Activated B cell treated with CpG ODN at 0.5 μM for 24 hours (primary cell): ENCODE measurements at regions of chr1 and their contacts with region 1.

Region 1: DNA sequence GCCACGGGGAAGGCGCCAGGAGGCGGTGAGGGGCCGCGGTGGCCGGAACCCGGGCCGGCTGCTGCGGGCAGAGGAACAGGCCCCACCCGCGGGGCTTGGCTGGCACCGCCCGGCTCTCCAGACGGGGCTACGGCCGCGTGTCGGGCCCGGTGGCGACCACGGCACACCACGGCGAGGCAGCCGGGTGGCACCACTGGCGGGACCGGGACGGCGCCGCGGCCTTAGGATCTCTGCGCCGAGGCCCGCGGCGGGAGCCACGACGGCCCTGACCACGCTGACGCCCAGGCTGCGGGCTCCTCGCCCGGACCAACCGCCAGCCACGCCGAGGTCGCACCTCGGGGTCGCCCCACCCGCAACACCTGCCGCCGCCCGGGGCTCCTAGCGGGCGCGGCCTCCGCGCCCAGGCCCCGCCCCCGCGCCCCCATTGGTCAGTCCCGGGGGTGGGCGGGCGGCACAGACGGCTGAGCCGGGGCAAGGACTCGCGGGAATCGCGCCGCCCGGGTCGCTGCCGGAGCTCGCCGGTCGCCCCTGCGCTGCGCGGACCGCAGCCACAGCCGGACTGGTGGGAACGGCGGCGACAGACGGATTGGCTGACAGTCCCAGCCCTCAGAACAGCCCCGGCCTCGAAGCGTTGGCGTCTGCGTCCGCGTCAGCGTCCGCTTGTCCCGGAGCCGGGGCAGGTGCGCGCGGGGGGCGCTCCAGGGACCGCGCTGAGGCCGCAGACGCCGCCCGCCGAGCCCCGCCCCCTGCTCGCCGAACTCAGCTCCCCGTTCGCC is at the start of gene BMP8A:
- DNase-seq: peak; percentile 80
- ATAC-seq: peak; percentile 94
- H3K4me3 Mint-ChIP-seq: peak within 1 kb of the TSS; percentile 69
- H3K27ac Mint-ChIP-seq: no peak within 1 kb of the TSS
- H3K4me1 Mint-ChIP-seq: peaks cover 6% of the 10 kb centered on the region
- H3K27me3 Mint-ChIP-seq: peaks cover 20% of the 10 kb centered on the region
- CTCF ChIP-seq: no peak
- total RNA-seq, gene BMP8A: 0.20 TPM in 1 of 2 replicates, not detected in the other

Region 2: GRCh38 chr1:39378377-39378776 is 113.0 kb before region 1 on chr1:
- CTCF ChIA-PET with region 1: no interaction called
- POLR2A ChIA-PET with region 1: no interaction called
- intact Hi-C with region 1: no loop called
- DNase-seq: no peak
- ATAC-seq: no peak
- H3K4me3 Mint-ChIP-seq: no peak overlapping the region
- H3K27ac Mint-ChIP-seq: no peak overlapping the region
- H3K4me1 Mint-ChIP-seq: no peaks in the 10 kb centered on the region
- H3K27me3 Mint-ChIP-seq: no peaks in the 10 kb centered on the region
- CTCF ChIP-seq: no peak

Region 3: DNA sequence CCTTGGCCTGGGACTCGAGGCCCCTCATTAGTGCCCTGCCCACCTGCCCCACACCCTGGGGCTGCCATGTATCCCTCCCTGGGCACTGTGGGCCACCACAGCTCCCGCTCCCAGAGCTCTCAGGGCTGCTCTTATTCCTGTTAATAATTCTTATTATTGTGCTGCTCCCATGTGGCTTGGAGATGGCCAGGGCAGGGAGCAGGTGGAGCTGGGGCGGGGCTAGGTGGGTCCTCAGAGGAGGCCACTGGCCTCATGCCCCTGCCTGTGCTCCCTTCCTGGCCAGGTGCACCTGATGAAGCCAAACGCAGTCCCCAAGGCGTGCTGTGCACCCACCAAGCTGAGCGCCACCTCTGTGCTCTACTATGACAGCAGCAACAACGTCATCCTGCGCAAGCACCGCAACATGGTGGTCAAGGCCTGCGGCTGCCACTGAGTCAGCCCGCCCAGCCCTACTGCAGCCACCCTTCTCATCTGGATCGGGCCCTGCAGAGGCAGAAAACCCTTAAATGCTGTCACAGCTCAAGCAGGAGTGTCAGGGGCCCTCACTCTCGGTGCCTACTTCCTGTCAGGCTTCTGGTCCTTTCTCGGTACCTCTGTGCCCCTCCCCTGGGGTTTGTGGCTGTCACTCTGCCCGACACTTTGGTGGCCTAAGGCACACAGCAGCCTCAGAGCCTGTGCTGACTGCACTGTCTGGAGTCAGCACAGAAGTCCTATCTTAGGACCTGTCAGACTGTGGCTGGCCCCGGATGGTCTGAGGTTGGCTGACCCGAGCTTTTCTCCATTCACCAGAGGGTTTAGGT is 34.2 kb after region 1 on chr1:
- CTCF ChIA-PET with region 1: no interaction called
- POLR2A ChIA-PET with region 1: no interaction called
- intact Hi-C with region 1: loop called (anchors 5 kb)
- DNase-seq: peak; percentile 73
- ATAC-seq: peak; percentile 99
- H3K4me3 Mint-ChIP-seq: peak overlapping the region; percentile 64
- H3K27ac Mint-ChIP-seq: peak overlapping the region; percentile 81
- H3K4me1 Mint-ChIP-seq: peaks cover 32% of the 10 kb centered on the region
- H3K27me3 Mint-ChIP-seq: no peaks in the 10 kb centered on the region
- CTCF ChIP-seq: no peak

Region 4: DNA sequence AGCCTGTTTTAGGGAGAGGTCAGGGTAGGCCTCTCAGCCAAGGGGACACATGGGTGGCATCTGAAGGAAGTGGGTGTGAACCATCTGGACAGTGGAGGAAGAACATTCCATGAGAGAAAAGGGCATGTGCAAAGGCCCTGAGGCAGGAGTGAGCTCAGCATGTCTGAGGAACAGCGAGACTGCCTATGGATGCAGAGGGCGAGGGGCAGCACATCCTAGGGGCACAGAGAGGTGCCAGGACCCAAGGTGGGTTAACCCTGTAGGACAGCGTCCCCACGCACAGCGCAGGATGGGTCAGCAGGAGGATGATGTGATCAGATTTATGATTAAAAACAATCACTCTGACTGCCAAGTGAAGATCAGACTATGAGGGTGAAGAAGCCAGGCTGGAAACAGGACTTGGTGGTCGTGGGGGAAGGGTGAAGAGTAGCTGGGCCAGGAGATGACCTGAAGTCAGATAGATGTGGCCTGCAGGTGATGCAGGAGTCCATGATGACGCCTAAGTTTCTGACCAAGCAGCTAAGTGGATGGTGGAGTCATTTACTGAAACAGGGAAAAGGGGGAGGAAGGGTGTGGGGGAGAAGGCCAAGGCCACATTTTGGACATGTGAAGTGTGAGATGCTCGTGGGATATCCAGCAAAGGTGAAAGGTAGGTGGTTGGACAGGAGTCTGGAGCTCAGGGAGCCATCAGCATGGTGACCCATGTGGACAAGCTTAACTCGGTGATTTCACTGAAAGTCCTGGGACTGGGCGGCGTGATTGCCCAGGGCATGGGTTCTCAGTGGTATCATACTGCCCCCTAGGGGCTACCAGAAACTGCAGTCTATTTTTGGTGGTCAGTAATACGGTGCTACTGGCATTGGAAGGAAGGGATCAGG is 47.5 kb after region 1 on chr1:
- CTCF ChIA-PET with region 1: interaction called, 6 read pairs
- POLR2A ChIA-PET with region 1: no interaction called
- intact Hi-C with region 1: loop called (anchors 1 kb)
- DNase-seq: peak; percentile 38
- ATAC-seq: peak; percentile 80
- H3K4me3 Mint-ChIP-seq: no peak overlapping the region
- H3K27ac Mint-ChIP-seq: no peak overlapping the region
- H3K4me1 Mint-ChIP-seq: peaks cover 17% of the 10 kb centered on the region
- H3K27me3 Mint-ChIP-seq: no peaks in the 10 kb centered on the region
- CTCF ChIP-seq: no peak